ENCODE measurements at regions of chr16 and their contacts with region 1.

Region 1: GRCh38 chr16:66608241-66609138 is 4.0 kb downstream of the CMTM3 start:
- DNase-seq: peak; percentile 86
- H3K4me3 Mint-ChIP-seq: no peak overlapping the region
- H3K27ac Mint-ChIP-seq: no peak overlapping the region
- H3K4me1 Mint-ChIP-seq: peaks cover 14% of the 10 kb centered on the region
- H3K27me3 Mint-ChIP-seq: no peaks in the 10 kb centered on the region
- CTCF ChIP-seq: peak; percentile 78

Region 2: DNA sequence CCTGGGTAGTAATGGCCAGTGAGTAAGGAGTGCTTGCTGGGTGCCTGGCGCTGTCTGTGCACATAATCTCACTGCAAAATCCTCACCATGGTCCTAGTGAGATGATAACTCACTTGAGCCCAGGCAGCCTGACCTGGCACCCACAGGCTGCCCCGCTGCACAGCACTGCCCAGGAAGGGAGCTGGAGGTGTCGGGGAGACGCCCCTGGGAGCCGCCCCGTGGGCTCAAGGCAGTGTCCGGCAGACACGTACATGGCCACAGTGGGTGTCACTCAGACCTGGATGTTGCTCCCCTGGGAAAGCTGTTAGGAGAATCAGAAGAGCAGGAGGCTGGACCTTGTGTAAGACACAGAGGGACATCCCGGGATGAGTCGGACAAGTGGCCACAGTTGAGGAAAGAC is 137.2 kb before region 1 on chr16:
- CTCF ChIA-PET with region 1: no interaction called
- POLR2A ChIA-PET with region 1: no interaction called
- intact Hi-C with region 1: no loop called
- DNase-seq: no peak
- H3K4me3 Mint-ChIP-seq: no peak overlapping the region
- H3K27ac Mint-ChIP-seq: no peak overlapping the region
- H3K4me1 Mint-ChIP-seq: peaks cover 6% of the 10 kb centered on the region
- H3K27me3 Mint-ChIP-seq: no peaks in the 10 kb centered on the region
- CTCF ChIP-seq: no peak

Region 3: GRCh38 chr16:66562407-66562806 is 46.1 kb before region 1 on chr16:
- CTCF ChIA-PET with region 1: interaction called, 36 read pairs
- POLR2A ChIA-PET with region 1: interaction called, 4 read pairs
- intact Hi-C with region 1: no loop called
- DNase-seq: no peak
- H3K4me3 Mint-ChIP-seq: no peak overlapping the region
- H3K27ac Mint-ChIP-seq: no peak overlapping the region
- H3K4me1 Mint-ChIP-seq: no peaks in the 10 kb centered on the region
- H3K27me3 Mint-ChIP-seq: no peaks in the 10 kb centered on the region
- CTCF ChIP-seq: peak; percentile 24

Region 4: GRCh38 chr16:66618588-66619375 is 10.3 kb after region 1 on chr16:
- CTCF ChIA-PET with region 1: interaction called, 24 read pairs
- POLR2A ChIA-PET with region 1: interaction called, 17 read pairs
- intact Hi-C with region 1: no loop called
- DNase-seq: peak; percentile 96
- H3K4me3 Mint-ChIP-seq: peak overlapping the region; percentile 47
- H3K27ac Mint-ChIP-seq: peak overlapping the region; percentile 75
- H3K4me1 Mint-ChIP-seq: peaks cover 32% of the 10 kb centered on the region
- H3K27me3 Mint-ChIP-seq: no peaks in the 10 kb centered on the region
- CTCF ChIP-seq: no peak

Region 5: DNA sequence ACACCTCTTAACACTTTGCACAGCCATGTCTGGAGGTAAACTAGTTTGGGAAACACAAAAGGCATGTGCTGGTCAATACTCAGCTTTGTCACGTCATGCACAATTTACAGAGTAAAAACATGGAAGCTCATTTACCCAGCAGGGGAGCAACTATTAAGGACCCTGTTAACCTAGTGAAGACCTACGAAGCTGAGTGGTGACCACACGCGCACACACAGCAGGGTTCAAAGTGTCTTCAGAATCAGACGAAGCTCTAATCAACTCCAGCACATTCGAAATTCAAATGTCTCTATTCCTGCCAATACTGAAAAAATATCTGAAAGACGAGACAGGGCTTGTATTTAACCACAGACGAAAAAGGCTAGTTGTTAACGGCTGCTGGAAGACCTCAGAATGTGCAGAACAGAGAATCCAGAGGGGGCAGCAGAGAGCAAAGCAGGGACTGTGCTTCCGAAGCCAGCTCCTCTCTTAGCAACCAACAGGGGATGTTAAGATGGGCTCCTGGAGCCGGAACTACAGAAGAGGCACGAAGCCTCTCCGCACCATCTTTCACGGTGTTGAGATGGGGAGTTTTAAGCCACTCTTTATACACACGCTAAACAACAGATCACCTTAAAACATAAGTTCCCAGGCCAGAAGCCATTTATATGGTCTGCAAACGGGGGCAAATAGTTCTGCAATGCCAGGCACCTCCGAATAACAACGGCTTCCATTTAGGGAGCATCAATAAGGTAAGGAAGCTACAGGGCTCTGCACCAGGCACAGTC is 42.4 kb after region 1 on chr16:
- CTCF ChIA-PET with region 1: interaction called, 23 read pairs
- POLR2A ChIA-PET with region 1: interaction called, 4 read pairs
- intact Hi-C with region 1: loop called (anchors 1 kb)
- DNase-seq: peak; percentile 84
- H3K4me3 Mint-ChIP-seq: peak overlapping the region; percentile 50
- H3K27ac Mint-ChIP-seq: peak overlapping the region; percentile 64
- H3K4me1 Mint-ChIP-seq: peaks cover 39% of the 10 kb centered on the region
- H3K27me3 Mint-ChIP-seq: no peaks in the 10 kb centered on the region
- CTCF ChIP-seq: peak; percentile 90

Region 6: DNA sequence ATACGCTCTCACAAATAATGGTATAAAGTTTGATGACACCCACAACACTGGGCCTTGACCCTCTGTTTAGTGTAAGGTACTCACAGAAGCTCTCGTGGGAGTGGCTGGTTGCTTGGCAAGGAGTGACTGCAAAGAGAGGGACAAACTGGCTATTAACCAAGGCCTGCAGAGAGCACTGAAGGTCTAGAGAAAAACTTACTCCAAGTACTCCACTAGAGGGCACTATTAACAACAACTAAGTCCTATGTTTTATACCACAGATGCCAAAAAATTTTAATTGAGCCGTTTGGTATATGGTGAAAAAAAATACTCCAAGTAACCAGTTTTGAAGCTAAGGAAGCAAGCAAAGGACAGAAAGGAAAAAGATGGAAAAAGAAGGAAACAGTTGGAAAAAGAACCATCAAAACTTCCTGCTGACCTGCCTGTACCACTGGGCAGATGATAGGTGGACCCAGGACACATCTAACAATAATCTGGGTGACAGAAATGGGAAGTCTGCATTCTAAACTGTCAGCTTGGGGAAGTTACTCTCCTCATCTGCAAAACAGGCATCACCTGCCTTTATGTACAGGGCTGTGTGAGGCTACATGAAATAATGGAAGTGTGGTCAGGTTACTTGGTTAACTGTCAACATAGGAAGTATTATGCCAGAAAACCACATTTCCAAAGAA is 119.8 kb after region 1 on chr16:
- CTCF ChIA-PET with region 1: interaction called, 14 read pairs
- POLR2A ChIA-PET with region 1: no interaction called
- intact Hi-C with region 1: no loop called
- DNase-seq: peak; percentile 63
- H3K4me3 Mint-ChIP-seq: no peak overlapping the region
- H3K27ac Mint-ChIP-seq: no peak overlapping the region
- H3K4me1 Mint-ChIP-seq: peaks cover 7% of the 10 kb centered on the region
- H3K27me3 Mint-ChIP-seq: no peaks in the 10 kb centered on the region
- CTCF ChIP-seq: peak; percentile 53

Region 7: DNA sequence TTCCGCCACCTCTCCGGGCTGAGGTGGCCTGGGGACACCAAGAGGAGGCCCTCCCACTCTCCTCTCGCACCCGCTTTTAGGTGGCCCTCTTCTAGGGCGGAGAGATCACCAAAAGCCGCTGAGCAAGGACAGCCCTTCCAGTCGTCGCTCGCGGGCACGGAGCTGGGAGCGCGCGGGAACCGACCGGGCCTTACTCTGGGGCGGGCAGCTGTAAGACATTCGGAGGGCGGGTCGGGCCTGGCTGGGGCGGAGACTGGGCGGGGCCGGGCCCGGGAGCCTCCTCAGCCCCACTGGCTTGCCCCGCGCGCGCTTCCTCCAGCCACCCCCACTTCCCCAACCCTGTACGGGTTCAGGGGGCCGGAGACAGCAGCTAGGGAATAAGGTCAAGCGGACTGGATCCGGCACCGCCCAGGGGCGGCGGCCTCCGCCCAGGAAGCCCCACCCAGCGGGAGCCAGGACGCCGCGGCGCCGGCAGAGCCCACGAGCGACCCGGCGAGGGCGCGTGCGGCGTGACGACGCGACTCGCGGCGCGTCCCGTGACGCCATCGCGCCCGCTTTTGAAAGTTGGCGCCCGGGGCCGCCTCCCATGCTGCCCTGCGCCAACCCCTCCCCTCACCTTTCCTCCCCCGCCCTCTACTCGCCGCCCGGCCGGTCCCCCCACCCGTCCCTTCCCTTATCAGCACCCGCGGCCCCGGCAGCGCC is 953.5 kb after region 1 on chr16:
- CTCF ChIA-PET with region 1: no interaction called
- POLR2A ChIA-PET with region 1: no interaction called
- intact Hi-C with region 1: no loop called
- DNase-seq: peak; percentile 96
- H3K4me3 Mint-ChIP-seq: peak overlapping the region; percentile 88
- H3K27ac Mint-ChIP-seq: peak overlapping the region; percentile 81
- H3K4me1 Mint-ChIP-seq: peaks cover 7% of the 10 kb centered on the region
- H3K27me3 Mint-ChIP-seq: no peaks in the 10 kb centered on the region
- CTCF ChIP-seq: no peak

Measured in MCF 10A (cell line).